Sigmoid colon (tissue), 7 donors: ENCODE measurements at regions of chr2 and their contacts with region 1.

Region 1: GRCh38 chr2:25276569-25277465 is 64.9 kb downstream of the DNMT3A start:
- DNase-seq: peak; percentile 83
- H3K4me3 ChIP-seq: peak overlapping the region; percentile 17 to 57 (median 50)
- H3K27ac ChIP-seq: peak overlapping the region; percentile 77 to 93 (median 82)
- H3K4me1 ChIP-seq: peaks cover 0 to 56% (median 44%) of the 10 kb centered on the region in 4 donors
- H3K27me3 ChIP-seq: no peaks in the 10 kb centered on the region
- CTCF ChIP-seq: peak; percentile 29 to 93 (median 86)
- EP300 ChIP-seq: no peak
- POLR2A ChIP-seq: no peak

Region 2: DNA sequence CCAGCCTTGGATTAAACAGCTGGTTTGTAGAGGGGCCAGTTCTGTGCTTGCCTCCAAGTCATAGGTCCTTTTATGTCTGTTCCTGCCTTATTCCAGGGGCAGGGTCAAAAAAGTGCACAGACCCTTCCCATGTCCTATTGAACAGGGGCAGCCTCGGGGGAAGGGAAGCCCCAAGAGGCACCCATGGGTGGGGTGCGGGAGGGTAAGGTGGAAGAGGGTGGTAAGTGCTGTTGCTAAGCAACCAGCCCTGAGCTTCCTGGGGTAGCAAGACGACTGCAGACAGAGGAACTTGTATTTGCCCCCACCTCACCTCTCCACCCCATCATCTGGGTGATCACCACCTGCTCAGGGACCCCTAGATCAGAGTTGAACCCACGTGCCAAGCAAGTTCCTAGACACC is 57.2 kb after region 1 on chr2:
- intact Hi-C with region 1: loop called (anchors 2 kb)
- DNase-seq: no peak
- H3K4me3 ChIP-seq: no peak overlapping the region
- H3K27ac ChIP-seq: peak overlapping the region in 2 of 4 donors; percentile 0 to 66
- H3K4me1 ChIP-seq: peaks cover 0 to 97% (median 86%) of the 10 kb centered on the region in 4 donors
- H3K27me3 ChIP-seq: no peaks in the 10 kb centered on the region
- CTCF ChIP-seq: no peak
- EP300 ChIP-seq: no peak
- POLR2A ChIP-seq: no peak

Region 3: GRCh38 chr2:25342372-25343186 is 65.8 kb after region 1 on chr2:
- intact Hi-C with region 1: loop called (anchors 2 kb)
- DNase-seq: peak; percentile 92
- H3K4me3 ChIP-seq: peak overlapping the region; percentile 51 to 89 (median 73)
- H3K27ac ChIP-seq: peak overlapping the region; percentile 84 to 92 (median 88)
- H3K4me1 ChIP-seq: peaks cover 0 to 41% (median 33%) of the 10 kb centered on the region in 4 donors
- H3K27me3 ChIP-seq: no peaks in the 10 kb centered on the region
- CTCF ChIP-seq: peak; percentile 97 to 99 (median 98)
- EP300 ChIP-seq: no peak
- POLR2A ChIP-seq: no peak

Region 4: DNA sequence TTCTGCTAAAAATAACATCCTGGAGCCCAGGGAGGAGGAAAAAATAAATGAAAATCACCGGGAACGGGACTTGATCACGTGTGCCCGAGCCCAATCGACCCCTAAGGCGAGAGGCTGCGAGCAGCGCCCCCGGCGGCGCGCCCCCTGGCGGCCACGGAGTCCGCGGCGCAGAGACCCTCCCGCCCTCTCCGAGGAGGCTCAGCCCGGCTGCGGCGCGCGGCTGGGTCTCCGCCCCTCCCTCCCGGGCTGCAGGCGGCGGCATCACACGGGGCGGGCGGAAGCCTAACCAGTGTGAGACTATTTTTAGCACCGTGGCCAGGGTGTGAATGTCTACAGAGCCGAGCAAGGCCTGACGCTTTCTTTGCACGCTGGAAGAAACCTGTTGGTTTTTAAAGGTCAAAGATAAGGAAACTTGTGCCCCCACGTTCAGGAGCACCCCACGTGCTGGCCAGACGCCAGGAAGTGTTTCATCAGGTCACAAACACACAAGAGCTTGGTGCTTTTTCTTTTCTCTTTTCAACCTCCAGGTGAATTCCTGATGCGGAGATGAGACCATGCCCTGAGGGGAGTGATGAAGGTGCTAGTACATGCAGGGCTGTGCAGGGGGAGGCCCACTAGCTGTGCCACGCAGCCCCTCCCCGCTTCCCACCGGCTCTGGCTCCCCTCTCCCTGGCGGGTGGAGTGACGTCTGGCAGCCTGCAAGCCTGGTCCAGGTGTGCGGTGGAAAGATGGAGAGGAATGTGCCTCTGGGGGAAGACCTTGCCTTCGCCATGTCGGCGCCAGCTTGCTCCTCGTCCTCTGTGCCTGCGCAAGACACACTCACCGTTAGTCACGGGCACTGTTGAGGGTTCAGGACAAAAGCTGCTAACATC is 100.2 kb after region 1 on chr2:
- intact Hi-C with region 1: loop called (anchors 5 kb)
- DNase-seq: peak; percentile 93
- H3K4me3 ChIP-seq: peak overlapping the region in 3 of 4 donors; percentile 7 to 33 (median 31)
- H3K27ac ChIP-seq: peak overlapping the region; percentile 45 to 71 (median 52)
- H3K4me1 ChIP-seq: peaks cover 0 to 14% (median 13%) of the 10 kb centered on the region in 4 donors
- H3K27me3 ChIP-seq: no peaks in the 10 kb centered on the region
- CTCF ChIP-seq: peak; percentile 44 to 94 (median 72)
- EP300 ChIP-seq: no peak
- POLR2A ChIP-seq: no peak

Region 5: DNA sequence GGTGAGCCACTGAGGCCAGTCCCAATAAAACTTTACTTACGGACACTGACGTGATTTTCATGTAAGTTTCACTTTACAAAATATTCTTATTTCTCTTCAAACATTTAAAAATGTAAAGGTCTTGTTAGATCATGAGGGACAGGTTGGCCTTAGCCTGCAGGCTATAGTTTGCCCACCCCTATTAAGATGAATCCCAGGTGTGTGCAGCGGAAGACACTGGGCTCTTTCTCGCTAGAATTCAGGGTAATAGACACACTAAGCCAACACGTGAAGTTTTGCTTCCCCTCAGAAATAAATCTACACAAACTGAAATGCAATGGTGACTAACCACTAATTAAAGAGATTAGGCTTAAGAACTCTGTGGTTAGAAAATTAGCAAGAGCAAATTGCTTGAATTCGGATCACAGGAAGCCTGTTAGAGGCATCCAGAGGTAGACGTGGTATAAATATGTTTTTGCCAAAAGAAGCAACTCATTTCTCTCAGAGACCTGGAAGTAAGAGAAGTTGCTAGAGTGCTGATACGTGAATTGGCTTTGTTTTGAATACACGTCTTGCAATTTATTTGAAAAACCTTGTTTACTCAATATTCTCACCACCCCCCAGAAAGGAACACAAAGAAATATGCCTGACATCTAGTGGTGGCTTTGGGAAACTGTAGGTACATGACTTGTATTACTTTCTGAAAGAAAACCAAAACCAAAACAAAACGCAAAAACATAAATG is 245.0 kb after region 1 on chr2:
- intact Hi-C with region 1: loop called (anchors 5 kb)
- DNase-seq: no peak
- H3K4me3 ChIP-seq: peak overlapping the region in 3 of 4 donors; percentile 28 to 43 (median 33)
- H3K27ac ChIP-seq: peak overlapping the region in 1 of 4 donors; percentile 45
- H3K4me1 ChIP-seq: peaks cover 0 to 28% (median 14%) of the 10 kb centered on the region in 4 donors
- H3K27me3 ChIP-seq: no peaks in the 10 kb centered on the region
- CTCF ChIP-seq: peak; percentile 70 to 84 (median 80)
- EP300 ChIP-seq: no peak
- POLR2A ChIP-seq: no peak

Region 6: GRCh38 chr2:25664183-25664964 is 387.6 kb after region 1 on chr2:
- intact Hi-C with region 1: loop called (anchors 5 kb)
- DNase-seq: peak; percentile 66
- H3K4me3 ChIP-seq: no peak overlapping the region
- H3K27ac ChIP-seq: no peak overlapping the region
- H3K4me1 ChIP-seq: peaks cover 0 to 3% (median 0%) of the 10 kb centered on the region in 4 donors
- H3K27me3 ChIP-seq: no peaks in the 10 kb centered on the region
- CTCF ChIP-seq: peak in 3 of 4 experiments; percentile 21 to 43 (median 42)
- EP300 ChIP-seq: no peak
- POLR2A ChIP-seq: no peak